ENCODE measurements at regions of chr2 and their contacts with region 1.

Region 1: GRCh38 chr2:191051825-191052778 is 38.1 kb upstream of the STAT1 start:
- DNase-seq: no peak
- H3K4me3 ChIP-seq: no peak overlapping the region
- H3K27ac ChIP-seq: no peak overlapping the region
- H3K4me1 ChIP-seq: peaks cover 0 to 7% (median 0%) of the 10 kb centered on the region in 3 donors
- H3K27me3 ChIP-seq: peaks cover 0 to 10% (median 0%) of the 10 kb centered on the region in 4 donors
- CTCF ChIP-seq: peak; percentile 26 to 75 (median 58)
- POLR2A ChIP-seq: no peak

Region 2: GRCh38 chr2:191155608-191156071 is 103.5 kb after region 1 on chr2:
- intact Hi-C with region 1: loop called (anchors 5 kb)
- DNase-seq: no peak
- H3K4me3 ChIP-seq: no peak overlapping the region
- H3K27ac ChIP-seq: no peak overlapping the region
- H3K4me1 ChIP-seq: peaks cover 0 to 7% (median 0%) of the 10 kb centered on the region in 3 donors
- H3K27me3 ChIP-seq: peaks cover 0 to 5% (median 0%) of the 10 kb centered on the region in 4 donors
- CTCF ChIP-seq: peak; percentile 13 to 64 (median 40)
- POLR2A ChIP-seq: no peak

Measured in esophagus squamous epithelium (tissue), 5 donors.